PC-9 (cell line): ENCODE measurements at regions of chr2 and their contacts with region 1.

Region 1: DNA sequence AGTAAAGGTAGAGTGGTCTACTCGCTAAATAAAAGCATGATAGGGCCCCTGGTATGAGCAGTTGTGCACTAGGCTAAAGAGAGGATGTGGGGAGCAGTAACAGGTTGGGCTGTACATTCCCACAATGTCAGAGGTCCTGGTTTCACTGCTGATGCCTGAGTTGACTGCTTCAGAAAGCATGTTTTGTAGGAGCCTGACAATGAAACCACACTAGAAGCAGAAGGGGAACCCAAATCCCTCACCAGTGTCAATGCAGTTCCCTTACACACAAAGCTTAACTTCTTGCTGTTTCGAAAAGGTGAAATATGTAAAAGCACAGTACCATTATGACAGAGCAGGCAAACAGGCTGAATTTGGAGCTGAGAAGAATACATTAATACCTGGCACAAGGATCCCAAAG is 291.7 kb upstream of the KYNU start:
- DNase-seq: no peak
- H3K4me3 ChIP-seq: no peak overlapping the region
- H3K27ac ChIP-seq: no peak overlapping the region
- H3K4me1 ChIP-seq: no peaks in the 10 kb centered on the region
- H3K27me3 ChIP-seq: no peaks in the 10 kb centered on the region
- CTCF ChIP-seq: no peak

Region 2: DNA sequence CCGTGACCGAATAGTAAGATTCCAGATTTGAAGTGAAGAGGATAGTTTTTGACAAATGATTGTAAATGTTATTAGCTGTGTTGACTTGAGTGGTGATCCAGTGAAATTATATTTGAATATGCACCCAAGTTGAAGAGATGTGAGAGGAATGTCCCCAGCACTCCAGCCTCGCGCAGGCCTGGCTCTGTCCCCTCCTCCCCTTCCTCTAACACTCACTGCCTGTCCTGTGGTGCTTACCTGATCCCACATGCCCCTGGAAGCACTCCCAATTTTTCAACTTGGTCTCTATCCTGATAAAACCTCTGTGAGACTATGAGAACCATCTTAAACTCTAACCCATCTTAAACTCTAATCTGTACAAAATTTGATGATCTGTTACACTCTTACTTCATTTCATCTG is 300.3 kb before region 1 on chr2:
- CTCF ChIA-PET with region 1: no interaction called
- POLR2A ChIA-PET with region 1: interaction called, 11 read pairs
- intact Hi-C with region 1: no loop called
- DNase-seq: no peak
- H3K4me3 ChIP-seq: no peak overlapping the region
- H3K27ac ChIP-seq: no peak overlapping the region
- H3K4me1 ChIP-seq: no peaks in the 10 kb centered on the region
- H3K27me3 ChIP-seq: no peaks in the 10 kb centered on the region
- CTCF ChIP-seq: no peak

Region 3: GRCh38 chr2:142693171-142693950 is 107.6 kb after region 1 on chr2:
- CTCF ChIA-PET with region 1: no interaction called
- POLR2A ChIA-PET with region 1: no interaction called
- intact Hi-C with region 1: no loop called
- DNase-seq: no peak
- H3K4me3 ChIP-seq: no peak overlapping the region
- H3K27ac ChIP-seq: no peak overlapping the region
- H3K4me1 ChIP-seq: no peaks in the 10 kb centered on the region
- H3K27me3 ChIP-seq: no peaks in the 10 kb centered on the region
- CTCF ChIP-seq: no peak

Region 4: DNA sequence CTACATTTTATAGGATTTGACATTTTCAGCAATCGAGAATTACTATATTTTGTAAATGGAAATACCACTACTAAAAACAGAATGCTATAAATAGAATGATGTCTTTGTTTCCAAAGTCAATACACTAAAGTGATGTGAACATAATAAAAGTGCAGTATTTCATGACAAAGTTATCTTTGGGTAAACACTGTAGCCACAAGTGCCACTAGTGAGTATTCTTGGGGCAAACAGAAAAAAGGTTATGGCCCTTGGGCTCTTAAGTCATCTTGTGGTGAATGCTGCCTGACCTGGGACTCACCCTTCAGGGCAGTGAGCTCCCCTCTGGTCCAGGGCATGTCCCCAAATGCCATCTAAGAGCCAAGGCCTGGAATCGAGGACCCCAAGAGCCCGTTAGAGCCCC is 192.5 kb after region 1 on chr2:
- CTCF ChIA-PET with region 1: no interaction called
- POLR2A ChIA-PET with region 1: no interaction called
- intact Hi-C with region 1: no loop called
- DNase-seq: no peak
- H3K4me3 ChIP-seq: no peak overlapping the region
- H3K27ac ChIP-seq: no peak overlapping the region
- H3K4me1 ChIP-seq: no peaks in the 10 kb centered on the region
- H3K27me3 ChIP-seq: no peaks in the 10 kb centered on the region
- CTCF ChIP-seq: no peak